Activated T-helper 2 cell treated with anti-CD3 and anti-CD28 coated beads, Interferon-gamma antibody, Interleukin-2, Interleukin-4, amounts not matched to agents 10 μg/mL and 5 μg/mL and 100 μg/mL, durations not matched to agents 14 hours and 24 hours and 36 hours (primary cell): ENCODE measurements at regions of chr11 and their contacts with region 1.

Region 1: DNA sequence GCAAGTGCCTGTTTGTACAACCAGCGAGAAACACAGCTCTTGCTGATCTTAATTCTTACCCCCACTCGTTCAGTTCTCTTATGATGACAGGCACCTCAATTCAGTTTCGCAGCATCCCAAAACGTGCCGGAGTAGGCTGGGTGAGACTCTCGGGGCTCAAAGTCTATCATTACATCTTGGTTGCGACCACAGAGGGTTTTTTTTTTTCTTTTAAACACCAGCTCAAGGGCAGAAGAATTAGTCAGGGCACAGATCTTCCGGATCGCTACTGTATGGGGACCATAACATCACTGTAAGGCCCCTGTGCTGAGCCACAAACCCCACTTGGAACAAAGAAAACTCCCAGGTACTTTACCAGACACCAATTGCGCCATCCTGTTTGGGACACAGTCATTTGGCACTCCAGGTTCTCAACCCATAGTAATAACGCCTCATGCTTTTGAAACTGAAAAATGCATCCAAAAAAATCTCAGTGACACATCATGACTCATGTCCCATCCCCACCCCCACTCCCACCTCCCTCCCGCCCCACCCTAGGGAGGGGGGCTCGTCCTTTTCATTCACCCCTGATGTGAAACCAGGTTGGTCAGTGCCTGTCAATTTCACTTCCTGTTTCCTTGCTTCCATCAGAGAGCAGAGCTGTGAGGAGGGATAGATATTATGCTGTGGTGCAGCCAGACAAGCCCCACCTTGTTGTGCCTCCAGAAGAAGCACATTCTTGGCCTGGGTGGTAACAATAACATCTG is 41.0 kb upstream of the CD5 start:
- DNase-seq: peak; percentile 77
- H3K4me3 Mint-ChIP-seq: peak overlapping the region; percentile 71
- H3K27ac Mint-ChIP-seq: peak overlapping the region; percentile 93
- H3K4me1 Mint-ChIP-seq: peaks cover 80% of the 10 kb centered on the region
- H3K27me3 Mint-ChIP-seq: no peaks in the 10 kb centered on the region

Region 2: GRCh38 chr11:60913793-60914632 is 147.2 kb before region 1 on chr11 and contains the start of gene TMEM109:
- intact Hi-C with region 1: loop called (anchors 1 kb)
- DNase-seq: peak; percentile 85
- H3K4me3 Mint-ChIP-seq: peak within 1 kb of the TSS; percentile 99
- H3K27ac Mint-ChIP-seq: peak within 1 kb of the TSS; percentile 99
- H3K4me1 Mint-ChIP-seq: peaks cover 56% of the 10 kb centered on the region
- H3K27me3 Mint-ChIP-seq: peaks cover 4% of the 10 kb centered on the region
- total RNA-seq, gene TMEM109: 112 and 120 TPM in 2 replicates

Region 3: GRCh38 chr11:60985991-60986915 is 75.0 kb before region 1 on chr11:
- intact Hi-C with region 1: loop called (anchors 1 kb)
- DNase-seq: peak; percentile 82
- H3K4me3 Mint-ChIP-seq: peak overlapping the region; percentile 83
- H3K27ac Mint-ChIP-seq: peak overlapping the region; percentile 94
- H3K4me1 Mint-ChIP-seq: peaks cover 86% of the 10 kb centered on the region
- H3K27me3 Mint-ChIP-seq: no peaks in the 10 kb centered on the region

Region 4: DNA sequence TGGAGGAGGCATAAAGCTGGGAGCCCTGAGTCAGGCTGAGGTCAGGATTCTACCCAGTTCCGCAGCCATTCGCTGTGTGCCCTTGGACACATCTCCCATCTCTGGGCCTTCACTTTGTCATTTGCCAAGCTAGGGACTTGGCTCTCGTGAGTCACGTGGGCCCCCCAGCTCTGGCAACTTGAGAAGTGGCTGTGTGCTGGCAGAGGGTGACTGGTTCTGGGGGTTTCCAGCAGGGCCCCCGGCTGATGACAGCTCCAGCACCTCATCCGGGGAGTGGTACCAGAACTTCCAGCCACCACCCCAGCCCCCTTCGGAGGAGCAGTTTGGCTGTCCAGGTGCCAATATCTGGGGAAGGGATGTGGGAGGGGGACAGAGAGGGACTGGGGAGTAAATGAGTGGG is 43.2 kb before region 1 on chr11:
- intact Hi-C with region 1: no loop called
- DNase-seq: no peak
- H3K4me3 Mint-ChIP-seq: no peak overlapping the region
- H3K27ac Mint-ChIP-seq: peak overlapping the region; percentile 44
- H3K4me1 Mint-ChIP-seq: peaks cover 36% of the 10 kb centered on the region
- H3K27me3 Mint-ChIP-seq: no peaks in the 10 kb centered on the region

Region 5: GRCh38 chr11:61028272-61028761 is 32.9 kb before region 1 on chr11:
- intact Hi-C with region 1: loop called (anchors 1 kb)
- DNase-seq: no peak
- H3K4me3 Mint-ChIP-seq: peak overlapping the region; percentile 84
- H3K27ac Mint-ChIP-seq: peak overlapping the region; percentile 94
- H3K4me1 Mint-ChIP-seq: peaks cover 75% of the 10 kb centered on the region
- H3K27me3 Mint-ChIP-seq: no peaks in the 10 kb centered on the region

Region 6: DNA sequence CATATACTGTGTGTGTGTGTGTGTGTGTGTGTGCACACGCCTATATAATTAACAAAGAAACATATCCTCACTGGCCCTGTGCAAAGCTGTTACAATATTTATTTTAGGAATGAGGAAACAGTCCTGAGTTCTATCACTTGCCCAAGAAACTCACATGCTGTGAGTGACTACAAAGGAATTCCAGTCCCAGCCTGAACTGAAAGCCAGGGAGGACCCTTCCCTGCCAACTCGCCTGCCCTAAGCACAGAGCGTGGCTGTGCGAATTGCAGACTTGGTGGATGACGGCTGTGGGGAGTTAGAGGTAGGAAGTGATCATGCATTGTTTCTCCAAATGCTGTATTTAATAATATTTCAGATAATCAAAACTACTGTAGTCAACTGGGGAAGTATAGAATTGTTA is 14.6 kb after region 1 on chr11:
- intact Hi-C with region 1: loop called (anchors 1 kb)
- DNase-seq: no peak
- H3K4me3 Mint-ChIP-seq: peak overlapping the region; percentile 62
- H3K27ac Mint-ChIP-seq: peak overlapping the region; percentile 81
- H3K4me1 Mint-ChIP-seq: peaks cover 88% of the 10 kb centered on the region
- H3K27me3 Mint-ChIP-seq: no peaks in the 10 kb centered on the region

Region 7: DNA sequence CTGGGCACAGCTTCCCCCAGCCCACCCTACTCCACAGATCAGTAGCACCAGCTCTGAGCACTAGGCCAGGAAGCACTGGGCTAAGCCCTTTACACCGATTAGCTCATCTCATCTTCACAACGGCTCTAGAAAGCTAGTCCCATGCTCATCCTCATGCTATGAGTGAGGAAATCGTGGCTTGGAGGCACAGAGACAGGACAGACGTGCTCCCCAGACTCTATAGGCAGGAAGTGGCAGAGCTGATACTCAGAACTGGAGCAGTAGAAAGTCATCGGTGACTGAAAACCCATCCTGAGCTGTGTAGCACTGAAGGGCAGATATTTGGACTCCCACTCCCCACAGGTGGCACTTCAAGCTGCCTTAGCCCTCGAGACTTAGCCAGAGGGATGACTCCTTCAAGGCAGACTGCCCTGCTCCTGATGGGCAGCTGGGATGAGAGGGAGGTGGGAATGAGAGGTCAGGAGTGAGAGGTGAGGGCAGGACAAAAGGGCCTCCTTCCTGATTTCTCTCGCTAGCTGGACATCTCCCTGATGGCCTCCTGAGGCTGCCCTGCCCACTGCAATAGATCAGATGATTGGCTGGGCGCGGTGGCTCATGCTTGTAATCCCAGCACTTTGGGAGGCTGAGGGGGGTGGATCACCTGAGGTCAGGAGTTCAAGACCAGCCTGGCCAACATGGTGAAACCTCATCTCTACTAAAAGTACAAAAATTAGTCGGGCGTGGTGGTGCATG is 50.7 kb after region 1 on chr11:
- intact Hi-C with region 1: loop called (anchors 1 kb)
- DNase-seq: peak; percentile 73
- H3K4me3 Mint-ChIP-seq: peak overlapping the region; percentile 80
- H3K27ac Mint-ChIP-seq: peak overlapping the region; percentile 91
- H3K4me1 Mint-ChIP-seq: peaks cover 94% of the 10 kb centered on the region
- H3K27me3 Mint-ChIP-seq: no peaks in the 10 kb centered on the region